CD14-positive monocyte (primary cell): ENCODE measurements at regions of chr1 and their contacts with region 1.

Region 1: DNA sequence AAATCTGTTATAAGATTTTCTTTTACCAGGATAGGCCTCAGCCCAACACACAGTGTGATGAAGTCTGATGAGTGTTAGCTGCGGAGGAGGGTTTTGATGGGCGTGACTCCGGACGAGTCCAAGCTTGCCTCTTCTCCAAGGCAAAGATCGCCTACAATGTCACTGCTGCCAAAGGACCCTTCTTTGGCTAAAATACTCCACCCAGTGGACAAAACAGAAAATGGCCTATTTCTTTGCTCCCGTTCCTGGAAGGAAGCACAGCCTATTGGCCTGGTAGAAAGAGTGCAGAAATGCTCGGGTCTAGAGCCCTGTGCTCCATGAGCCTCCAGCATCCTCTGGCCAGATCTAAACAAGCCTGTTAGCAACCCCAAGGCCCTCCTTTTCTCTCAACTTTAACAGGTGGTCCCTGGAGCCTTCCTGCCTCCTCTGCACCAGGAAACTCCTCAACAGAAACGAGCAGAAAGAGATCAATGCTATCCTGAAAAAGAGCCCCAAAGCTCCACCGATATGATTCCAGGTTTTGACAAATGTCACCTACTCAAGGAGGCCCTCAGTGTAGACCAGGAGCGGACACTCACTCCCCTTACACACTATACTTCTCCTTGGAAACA is 3.4 kb upstream of the CASQ2 start:
- DNase-seq: peak; percentile 44 to 68 (median 53)
- H3K4me3 ChIP-seq: peak overlapping the region in 1 of 3 experiments; percentile 25
- H3K4me3 Mint-ChIP-seq: no peak overlapping the region
- H3K27ac ChIP-seq: no peak overlapping the region
- H3K27ac Mint-ChIP-seq: no peak overlapping the region
- H3K4me1 ChIP-seq: peaks cover 0 to 5% of the 10 kb centered on the region in 2 donors
- H3K4me1 Mint-ChIP-seq: peaks cover 2% of the 10 kb centered on the region
- H3K27me3 ChIP-seq: peaks cover 0 to 2% of the 10 kb centered on the region in 2 donors
- H3K27me3 Mint-ChIP-seq: peaks cover 7 to 20% (median 13%) of the 10 kb centered on the region in 3 donors
- CTCF ChIP-seq: peak; percentile 80

Region 2: DNA sequence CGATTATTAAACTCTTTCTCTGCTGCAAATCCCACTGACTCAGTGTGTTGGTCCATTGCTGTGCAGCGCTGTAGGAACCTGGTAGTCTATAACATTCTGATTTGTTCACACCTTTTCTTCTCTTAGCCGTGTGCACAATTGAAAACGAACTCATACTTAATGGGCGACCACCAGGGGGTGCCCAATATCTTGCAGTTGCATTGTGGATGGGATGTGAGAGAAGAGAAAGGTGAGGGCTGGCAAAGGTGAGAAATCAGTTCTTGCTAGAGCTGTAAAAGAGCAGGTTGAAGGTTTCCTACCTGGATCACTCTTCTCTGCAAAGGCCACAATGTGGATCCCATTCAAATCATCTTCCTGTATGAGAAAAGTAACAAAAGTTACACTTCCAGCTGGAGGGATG is 54.4 kb before region 1 on chr1:
- intact Hi-C with region 1: loop called (anchors 2 to 5 kb)
- DNase-seq: peak; percentile 33 to 56 (median 44)
- H3K4me3 ChIP-seq: no peak overlapping the region
- H3K4me3 Mint-ChIP-seq: no peak overlapping the region
- H3K27ac ChIP-seq: no peak overlapping the region
- H3K27ac Mint-ChIP-seq: peak overlapping the region in 1 of 7 donors; percentile 69
- H3K4me1 ChIP-seq: peaks cover 11% of the 10 kb centered on the region in 2 donors
- H3K4me1 Mint-ChIP-seq: peaks cover 13% of the 10 kb centered on the region
- H3K27me3 ChIP-seq: no peaks in the 10 kb centered on the region
- H3K27me3 Mint-ChIP-seq: peaks cover 3 to 7% (median 4%) of the 10 kb centered on the region in 3 donors
- CTCF ChIP-seq: peak; percentile 74